Gastrocnemius medialis (tissue), 4 donors: ENCODE measurements at regions of chr3 and their contacts with region 1.

Region 1: GRCh38 chr3:142993958-142994442 is 7.4 kb upstream of the U2SURP start:
- DNase-seq: peak in 1 of 2 donors; percentile 34
- ATAC-seq: peak; percentile 51 to 66
- H3K4me3 ChIP-seq: no peak overlapping the region
- H3K27ac ChIP-seq: no peak overlapping the region
- H3K4me1 ChIP-seq: no peaks in the 10 kb centered on the region
- H3K27me3 ChIP-seq: no peaks in the 10 kb centered on the region
- CTCF ChIP-seq: peak; percentile 31 to 72 (median 62)
- POLR2A ChIP-seq: no peak

Region 2: GRCh38 chr3:142578327-142579223 is 415.4 kb before region 1 on chr3 and contains the start of gene ATR:
- in situ Hi-C with region 1: loop called in 2 of 4 experiments (anchors 10 to 25 kb)
- intact Hi-C with region 1: no loop called
- DNase-seq: peak; percentile 95 to 96
- ATAC-seq: peak; percentile 98 to 99
- H3K4me3 ChIP-seq: peak within 1 kb of the TSS; percentile 76 to 98 (median 86)
- H3K27ac ChIP-seq: peak within 1 kb of the TSS; percentile 86 to 91 (median 88)
- H3K4me1 ChIP-seq: peaks cover 14 to 19% of the 10 kb centered on the region in 2 donors
- H3K27me3 ChIP-seq: no peaks in the 10 kb centered on the region
- CTCF ChIP-seq: peak in 2 of 5 experiments; percentile 14 to 19
- POLR2A ChIP-seq: peak; percentile 45 to 70
- total RNA-seq, gene ATR: 8.9 to 21.9 (median 10.0) TPM

Region 3: DNA sequence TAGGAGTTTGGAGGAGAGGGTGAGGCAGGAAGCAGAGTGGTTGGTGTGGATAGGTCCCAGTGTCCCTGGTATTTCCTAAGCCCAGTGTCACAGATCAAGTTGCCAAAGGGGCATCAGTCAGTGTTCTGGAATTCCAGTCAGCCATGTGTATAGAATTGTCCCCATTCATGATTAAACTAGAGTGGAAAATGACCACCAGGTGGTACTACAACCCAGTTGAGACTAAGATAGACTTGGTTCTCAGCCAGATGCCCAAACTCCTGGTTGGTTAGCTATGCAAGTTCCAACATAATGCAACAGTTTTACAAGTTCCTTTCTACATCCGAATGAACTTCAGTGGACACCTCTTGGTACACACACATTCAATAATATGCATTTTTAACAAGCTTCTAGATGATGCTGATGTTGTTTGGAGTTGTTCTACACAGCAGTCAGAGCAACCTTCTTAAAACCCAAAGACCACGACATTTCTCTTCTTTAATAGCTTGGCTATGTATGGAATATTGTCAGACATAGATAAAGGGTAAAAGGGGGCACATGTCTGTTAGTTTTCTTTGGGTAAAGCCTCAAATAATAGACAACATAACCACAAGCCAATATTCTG is 407.1 kb before region 1 on chr3:
- in situ Hi-C with region 1: loop called in 3 of 4 experiments (anchors 10 to 25 kb)
- intact Hi-C with region 1: no loop called
- DNase-seq: no peak
- ATAC-seq: peak in 1 of 2 donors; percentile 61
- H3K4me3 ChIP-seq: no peak overlapping the region
- H3K27ac ChIP-seq: no peak overlapping the region
- H3K4me1 ChIP-seq: no peaks in the 10 kb centered on the region
- H3K27me3 ChIP-seq: no peaks in the 10 kb centered on the region
- CTCF ChIP-seq: peak; percentile 23 to 58 (median 32)
- POLR2A ChIP-seq: no peak

Region 4: DNA sequence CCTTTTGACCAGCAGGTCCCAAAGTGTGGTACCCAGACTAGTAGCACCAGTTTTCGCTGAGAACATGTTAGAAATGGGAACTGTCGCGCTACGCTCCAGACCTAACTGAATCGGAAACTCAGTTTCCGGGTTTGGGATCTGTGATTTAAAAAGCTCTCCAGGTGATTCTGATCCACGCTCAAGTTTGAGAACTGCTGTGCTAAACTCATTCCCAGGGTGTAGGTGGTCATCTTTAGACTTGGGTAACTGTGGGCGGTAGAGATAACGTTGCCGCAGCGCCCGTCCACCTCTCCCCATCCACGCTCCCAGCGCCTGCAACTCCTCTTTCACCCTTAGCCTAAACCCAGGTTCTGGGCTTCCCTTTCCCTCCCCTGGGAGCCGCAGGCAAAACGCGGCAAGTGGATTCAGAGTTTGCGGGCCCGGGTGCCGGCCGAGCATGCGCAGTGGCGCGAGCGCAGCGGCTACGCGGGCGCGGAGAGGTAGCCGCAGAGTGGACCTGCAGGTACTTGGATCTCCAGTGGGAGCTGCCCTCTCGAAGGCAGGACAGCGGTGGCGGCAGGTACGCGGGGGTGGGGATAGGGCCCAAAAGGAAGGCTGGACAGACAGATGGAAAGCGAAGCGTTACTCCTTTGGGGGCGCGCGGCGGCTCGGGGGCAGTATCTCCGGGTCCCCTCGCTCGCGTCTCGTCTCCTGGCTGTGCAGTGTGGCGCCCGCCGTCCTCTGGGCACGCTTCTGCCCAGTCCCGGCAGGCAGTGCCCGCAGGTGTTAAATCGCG is 397.9 kb before region 1 on chr3 and contains the start of gene PLS1:
- in situ Hi-C with region 1: loop called in 2 of 4 experiments (anchors 10 to 25 kb)
- intact Hi-C with region 1: no loop called
- DNase-seq: peak; percentile 59 to 82
- ATAC-seq: peak; percentile 95 to 98
- H3K4me3 ChIP-seq: peak within 1 kb of the TSS; percentile 73 to 78 (median 76)
- H3K27ac ChIP-seq: peak within 1 kb of the TSS; percentile 52 to 67 (median 61)
- H3K4me1 ChIP-seq: peaks cover 0 to 4% of the 10 kb centered on the region in 2 donors
- H3K27me3 ChIP-seq: no peaks in the 10 kb centered on the region
- CTCF ChIP-seq: peak in 1 of 5 experiments; percentile 24
- POLR2A ChIP-seq: peak; percentile 24 to 26
- total RNA-seq, gene PLS1: 0.65 to 5.4 (median 0.94) TPM

Region 5: GRCh38 chr3:142828703-142829305 is 165.2 kb before region 1 on chr3:
- in situ Hi-C with region 1: loop called in 3 of 4 experiments (anchors 5 to 10 kb)
- intact Hi-C with region 1: loop called (anchors 1 kb)
- DNase-seq: peak; percentile 27 to 58
- ATAC-seq: peak; percentile 88
- H3K4me3 ChIP-seq: no peak overlapping the region
- H3K27ac ChIP-seq: no peak overlapping the region
- H3K4me1 ChIP-seq: no peaks in the 10 kb centered on the region
- H3K27me3 ChIP-seq: no peaks in the 10 kb centered on the region
- CTCF ChIP-seq: peak; percentile 36 to 73 (median 64)
- POLR2A ChIP-seq: no peak

Region 6: GRCh38 chr3:142929109-142929508 is 64.9 kb before region 1 on chr3:
- in situ Hi-C with region 1: loop called (anchors 5 to 10 kb)
- intact Hi-C with region 1: loop called (anchors 1 kb)
- DNase-seq: peak; percentile 24 to 58
- ATAC-seq: peak; percentile 81 to 87
- H3K4me3 ChIP-seq: no peak overlapping the region
- H3K27ac ChIP-seq: no peak overlapping the region
- H3K4me1 ChIP-seq: no peaks in the 10 kb centered on the region
- H3K27me3 ChIP-seq: no peaks in the 10 kb centered on the region
- CTCF ChIP-seq: peak; percentile 40 to 72 (median 63)
- POLR2A ChIP-seq: no peak

Region 7: DNA sequence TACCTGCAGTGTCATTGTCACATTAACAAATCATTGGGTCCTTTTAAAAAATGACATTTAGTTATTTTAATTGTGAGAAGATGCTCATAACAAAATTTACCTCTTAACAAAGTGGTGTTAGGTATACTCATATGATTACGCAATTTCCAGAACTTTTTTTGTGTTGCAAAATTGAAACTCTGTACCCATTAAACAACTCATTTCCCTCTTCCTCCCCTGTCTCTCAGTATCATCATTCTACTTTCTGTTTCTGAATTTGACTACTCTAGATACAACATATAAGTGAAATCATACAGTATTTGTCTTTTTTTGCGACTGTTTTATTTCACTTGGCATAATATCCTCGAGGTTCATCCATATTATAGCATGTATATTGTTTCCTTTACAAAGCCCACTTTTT is 66.9 kb after region 1 on chr3:
- in situ Hi-C with region 1: no loop called
- intact Hi-C with region 1: no loop called
- DNase-seq: no peak
- ATAC-seq: no peak
- H3K4me3 ChIP-seq: no peak overlapping the region
- H3K27ac ChIP-seq: no peak overlapping the region
- H3K4me1 ChIP-seq: no peaks in the 10 kb centered on the region
- H3K27me3 ChIP-seq: no peaks in the 10 kb centered on the region
- CTCF ChIP-seq: no peak
- POLR2A ChIP-seq: no peak

Region 8: GRCh38 chr3:143329567-143330211 is 335.7 kb after region 1 on chr3:
- in situ Hi-C with region 1: no loop called
- intact Hi-C with region 1: no loop called
- DNase-seq: no peak
- ATAC-seq: no peak
- H3K4me3 ChIP-seq: no peak overlapping the region
- H3K27ac ChIP-seq: no peak overlapping the region
- H3K4me1 ChIP-seq: no peaks in the 10 kb centered on the region
- H3K27me3 ChIP-seq: no peaks in the 10 kb centered on the region
- CTCF ChIP-seq: no peak
- POLR2A ChIP-seq: no peak